Activated T-helper 1 cell treated with anti-CD3 and anti-CD28 coated beads, Interleukin-12 subunit alpha, Interleukin-12 subunit beta, Interleukin-2, Interleukin-4 antibody, amounts not matched to agents 30 ng/mL and 10 ng/mL and 1 ng/mL, durations not matched to agents 14 hours and 24 hours and 36 hours (primary cell): ENCODE measurements at regions of chr14 and their contacts with region 1.

Region 1: GRCh38 chr14:71932220-71932981 is at the start of gene RGS6:
- DNase-seq: peak; percentile 11
- H3K4me3 Mint-ChIP-seq: peak within 1 kb of the TSS; percentile 69
- H3K27ac Mint-ChIP-seq: peak within 1 kb of the TSS; percentile 68
- H3K4me1 Mint-ChIP-seq: peaks cover 18% of the 10 kb centered on the region
- H3K27me3 Mint-ChIP-seq: peaks cover 54% of the 10 kb centered on the region
- total RNA-seq, gene RGS6: 2.0 and 2.4 TPM in 2 replicates

Region 2: GRCh38 chr14:71783085-71783484 is 149.3 kb before region 1 on chr14:
- intact Hi-C with region 1: no loop called
- DNase-seq: no peak
- H3K4me3 Mint-ChIP-seq: no peak overlapping the region
- H3K27ac Mint-ChIP-seq: no peak overlapping the region
- H3K4me1 Mint-ChIP-seq: no peaks in the 10 kb centered on the region
- H3K27me3 Mint-ChIP-seq: peaks cover 5% of the 10 kb centered on the region

Region 3: DNA sequence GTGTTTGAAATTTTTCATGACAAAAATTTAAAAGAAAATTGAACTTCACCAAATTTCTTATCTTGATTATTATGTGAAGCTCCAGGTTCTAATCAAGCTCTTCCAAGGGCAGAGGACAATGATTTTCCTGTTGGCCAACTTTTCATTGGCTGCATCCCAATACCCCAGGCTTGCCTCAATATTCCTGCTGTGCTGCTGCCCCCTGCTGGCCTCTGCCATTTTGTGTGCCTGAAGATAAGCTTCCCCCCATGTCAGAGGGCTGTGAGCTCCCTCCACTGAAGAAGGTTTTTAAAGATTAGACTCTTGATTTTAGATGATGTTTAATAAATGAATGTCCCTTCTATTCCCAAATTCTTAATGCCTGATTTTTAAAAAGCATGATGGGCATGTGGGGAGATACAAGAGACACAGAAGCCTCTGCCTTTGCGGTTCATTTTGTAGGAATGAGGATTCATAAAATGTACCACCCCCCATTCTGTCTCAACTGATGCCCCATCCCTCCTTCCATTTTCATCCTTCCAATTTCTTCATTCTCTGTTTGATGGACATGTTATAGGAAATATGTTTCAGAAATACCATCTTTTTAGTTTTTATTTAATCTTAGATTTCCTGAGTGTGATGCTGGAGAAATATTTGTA is 76.9 kb before region 1 on chr14:
- intact Hi-C with region 1: no loop called
- DNase-seq: peak; percentile 24
- H3K4me3 Mint-ChIP-seq: no peak overlapping the region
- H3K27ac Mint-ChIP-seq: no peak overlapping the region
- H3K4me1 Mint-ChIP-seq: peaks cover 14% of the 10 kb centered on the region
- H3K27me3 Mint-ChIP-seq: peaks cover 27% of the 10 kb centered on the region

Region 4: GRCh38 chr14:71967704-71968103 is 35.3 kb after region 1 on chr14:
- intact Hi-C with region 1: loop called (anchors 1 kb)
- DNase-seq: no peak
- H3K4me3 Mint-ChIP-seq: peak overlapping the region; percentile 34
- H3K27ac Mint-ChIP-seq: peak overlapping the region; percentile 75
- H3K4me1 Mint-ChIP-seq: peaks cover 8% of the 10 kb centered on the region
- H3K27me3 Mint-ChIP-seq: no peaks in the 10 kb centered on the region

Region 5: GRCh38 chr14:72023722-72024407 is 91.5 kb after region 1 on chr14:
- intact Hi-C with region 1: loop called (anchors 5 kb)
- DNase-seq: peak; percentile 38
- H3K4me3 Mint-ChIP-seq: peak overlapping the region; percentile 28
- H3K27ac Mint-ChIP-seq: no peak overlapping the region
- H3K4me1 Mint-ChIP-seq: peaks cover 13% of the 10 kb centered on the region
- H3K27me3 Mint-ChIP-seq: peaks cover 17% of the 10 kb centered on the region

Region 6: GRCh38 chr14:72291908-72292688 is 359.7 kb after region 1 on chr14:
- intact Hi-C with region 1: loop called (anchors 2 kb)
- DNase-seq: no peak
- H3K4me3 Mint-ChIP-seq: no peak overlapping the region
- H3K27ac Mint-ChIP-seq: no peak overlapping the region
- H3K4me1 Mint-ChIP-seq: no peaks in the 10 kb centered on the region
- H3K27me3 Mint-ChIP-seq: peaks cover 8% of the 10 kb centered on the region

Region 7: DNA sequence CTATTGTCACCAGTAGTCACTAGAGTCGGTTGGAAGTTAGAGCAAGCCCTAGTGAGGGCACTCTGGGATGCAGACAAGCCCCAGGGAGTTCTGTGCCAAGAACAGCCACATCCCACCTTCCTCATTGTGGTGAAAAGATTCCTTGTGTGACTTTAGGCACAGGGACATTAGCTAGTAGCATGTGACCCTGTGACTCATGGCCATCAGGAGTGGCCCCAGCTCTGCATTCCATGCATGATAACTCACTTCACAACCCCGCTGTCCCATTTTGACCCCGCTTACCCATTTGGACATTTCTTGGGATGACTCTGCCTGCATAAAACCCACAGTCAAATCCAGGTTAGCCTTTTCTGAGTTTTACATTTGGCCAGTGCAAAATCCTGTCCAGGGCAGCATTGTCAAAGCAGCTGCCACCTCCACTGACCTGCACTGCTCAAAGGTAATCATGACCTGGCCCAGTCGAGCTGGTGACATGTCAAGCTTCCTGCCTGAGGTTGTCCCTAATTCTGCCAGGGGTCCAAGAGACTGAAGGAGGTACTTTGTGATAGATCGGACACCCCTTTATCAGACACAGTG is 531.0 kb after region 1 on chr14:
- intact Hi-C with region 1: no loop called
- DNase-seq: no peak
- H3K4me3 Mint-ChIP-seq: no peak overlapping the region
- H3K27ac Mint-ChIP-seq: no peak overlapping the region
- H3K4me1 Mint-ChIP-seq: peaks cover 9% of the 10 kb centered on the region
- H3K27me3 Mint-ChIP-seq: peaks cover 2% of the 10 kb centered on the region